ENCODE measurements at regions of chr4 and their contacts with region 1.

Region 1: GRCh38 chr4:91037951-91038350 is 910.8 kb downstream of the CCSER1 start:
- DNase-seq: no peak
- H3K4me3 ChIP-seq: no peak overlapping the region
- H3K27ac ChIP-seq: no peak overlapping the region
- H3K4me1 ChIP-seq: no peaks in the 10 kb centered on the region
- CTCF ChIP-seq: no peak

Region 2: GRCh38 chr4:91064157-91064853 is 26.4 kb after region 1 on chr4:
- CTCF ChIA-PET with region 1: no interaction called
- POLR2A ChIA-PET with region 1: no interaction called
- intact Hi-C with region 1: loop called (anchors 1 kb)
- DNase-seq: no peak
- H3K4me3 ChIP-seq: no peak overlapping the region
- H3K27ac ChIP-seq: no peak overlapping the region
- H3K4me1 ChIP-seq: no peaks in the 10 kb centered on the region
- CTCF ChIP-seq: no peak